Right cardiac atrium (tissue), 5 donors: ENCODE measurements at regions of chr11 and their contacts with region 1.

Region 1: DNA sequence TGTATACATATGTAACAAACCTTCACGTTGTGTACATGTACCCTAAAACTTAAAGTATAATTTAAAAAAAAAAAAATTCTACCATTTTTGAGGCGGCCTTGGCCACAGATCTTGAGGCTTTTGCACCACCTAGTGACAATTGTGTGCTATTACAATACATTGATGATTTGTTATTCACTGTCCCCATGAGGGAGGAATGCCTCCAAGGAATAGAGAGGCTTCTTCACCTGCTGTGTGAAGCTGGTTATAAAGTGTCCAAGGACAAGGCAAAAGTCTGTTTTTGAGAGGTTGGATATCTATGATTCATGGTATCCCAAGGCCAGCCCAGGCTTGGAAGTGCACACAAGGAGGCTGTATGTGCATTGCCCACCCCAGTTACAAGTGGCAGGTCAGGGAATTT is 30.7 kb downstream of the SLC22A25 start:
- DNase-seq: no peak
- ATAC-seq: no peak
- H3K4me3 ChIP-seq: no peak overlapping the region
- H3K27ac ChIP-seq: no peak overlapping the region
- H3K4me1 ChIP-seq: no peaks in the 10 kb centered on the region
- H3K27me3 ChIP-seq: no peaks in the 10 kb centered on the region

Region 2: DNA sequence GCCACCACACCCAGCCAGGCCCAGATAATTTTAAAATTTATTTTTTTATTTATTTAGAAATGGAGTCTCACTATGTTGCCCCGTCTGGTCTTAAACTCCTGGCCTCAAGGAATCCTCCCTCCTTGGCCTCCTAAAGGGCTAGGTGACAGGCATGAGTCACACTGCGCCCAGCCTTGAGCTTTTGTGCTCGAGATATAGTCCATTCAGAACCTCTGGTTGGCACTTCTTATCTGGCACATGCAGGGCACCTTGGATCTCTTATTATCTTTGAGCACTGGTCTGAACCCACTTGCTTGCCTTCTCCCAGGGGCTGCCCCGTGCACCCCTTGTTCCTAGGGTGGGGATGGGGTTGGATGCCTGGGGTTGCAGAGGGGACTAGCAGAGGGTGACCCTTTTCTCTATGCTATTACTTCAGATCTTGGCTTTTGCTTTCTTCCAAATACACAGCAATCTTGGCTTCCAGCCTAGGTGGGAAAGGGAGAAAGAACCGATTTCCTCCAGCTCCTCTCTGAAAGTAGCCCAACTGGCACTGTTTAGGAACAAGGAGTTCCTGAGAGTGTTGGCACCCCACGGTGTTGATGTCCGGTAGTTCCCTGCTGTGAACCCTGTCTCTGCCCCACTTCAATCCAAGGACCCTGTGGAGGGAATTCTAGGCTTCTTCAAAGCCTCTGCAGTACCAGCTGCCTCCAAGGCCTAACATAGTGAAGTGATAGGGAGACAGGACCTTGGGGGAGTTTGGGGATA is 333.3 kb before region 1 on chr11:
- intact Hi-C with region 1: no loop called
- DNase-seq: peak in 1 of 3 donors; percentile 69
- ATAC-seq: peak in 1 of 2 donors; percentile 2
- H3K4me3 ChIP-seq: no peak overlapping the region
- H3K27ac ChIP-seq: peak overlapping the region; percentile 95
- H3K4me1 ChIP-seq: peaks cover 11% of the 10 kb centered on the region
- H3K27me3 ChIP-seq: no peaks in the 10 kb centered on the region

Region 3: DNA sequence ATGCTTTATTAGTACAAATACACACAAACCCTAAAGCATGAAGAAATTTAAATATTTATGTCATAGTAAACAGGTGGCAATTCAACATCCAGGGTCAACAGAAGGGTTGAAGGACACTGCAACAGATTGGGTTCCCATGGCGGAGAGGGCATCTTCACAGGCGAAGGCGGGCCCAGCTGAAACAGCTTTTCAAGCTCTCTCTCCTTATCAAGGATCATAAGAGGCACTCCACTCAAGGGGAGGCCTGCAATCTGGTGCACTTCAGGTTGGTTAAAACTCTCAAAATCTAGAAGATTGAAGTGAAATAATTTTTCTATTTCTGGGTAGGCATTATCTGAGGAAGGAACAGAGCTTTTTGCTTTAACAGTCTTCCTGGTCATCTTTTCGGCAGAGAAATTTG is 180.3 kb before region 1 on chr11:
- intact Hi-C with region 1: loop called in 2 of 4 experiments (anchors 5 to 10 kb)
- DNase-seq: no peak
- ATAC-seq: no peak
- H3K4me3 ChIP-seq: no peak overlapping the region
- H3K27ac ChIP-seq: no peak overlapping the region
- H3K4me1 ChIP-seq: peaks cover 2% of the 10 kb centered on the region
- H3K27me3 ChIP-seq: no peaks in the 10 kb centered on the region

Region 4: DNA sequence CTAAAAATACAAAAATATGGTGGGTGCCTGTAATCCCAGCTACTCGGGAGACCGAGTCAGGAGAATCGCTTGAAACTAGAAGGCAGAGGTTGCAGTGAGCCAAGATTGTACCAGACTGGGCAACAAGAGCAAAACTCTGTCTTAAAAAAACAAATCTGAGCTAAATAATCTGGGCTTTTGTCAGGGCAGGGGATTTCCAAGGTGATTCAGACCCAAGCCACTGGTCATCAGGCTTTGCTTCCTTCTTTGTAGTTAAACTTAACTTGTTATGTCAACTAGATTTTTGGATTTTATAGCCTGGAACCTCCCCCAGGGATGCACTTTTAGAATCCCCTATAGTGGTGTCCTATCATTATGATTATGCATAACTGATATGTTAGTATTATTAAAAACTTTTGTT is 170.1 kb before region 1 on chr11:
- intact Hi-C with region 1: loop called in 2 of 4 experiments (anchors 5 to 10 kb)
- DNase-seq: no peak
- ATAC-seq: no peak
- H3K4me3 ChIP-seq: no peak overlapping the region
- H3K27ac ChIP-seq: no peak overlapping the region
- H3K4me1 ChIP-seq: no peaks in the 10 kb centered on the region
- H3K27me3 ChIP-seq: no peaks in the 10 kb centered on the region

Region 5: GRCh38 chr11:63165706-63166310 is 46.9 kb before region 1 on chr11:
- intact Hi-C with region 1: no loop called
- DNase-seq: no peak
- ATAC-seq: no peak
- H3K4me3 ChIP-seq: no peak overlapping the region
- H3K27ac ChIP-seq: no peak overlapping the region
- H3K4me1 ChIP-seq: no peaks in the 10 kb centered on the region
- H3K27me3 ChIP-seq: no peaks in the 10 kb centered on the region